ENCODE measurements at regions of chr4 and their contacts with region 1.

Region 1: DNA sequence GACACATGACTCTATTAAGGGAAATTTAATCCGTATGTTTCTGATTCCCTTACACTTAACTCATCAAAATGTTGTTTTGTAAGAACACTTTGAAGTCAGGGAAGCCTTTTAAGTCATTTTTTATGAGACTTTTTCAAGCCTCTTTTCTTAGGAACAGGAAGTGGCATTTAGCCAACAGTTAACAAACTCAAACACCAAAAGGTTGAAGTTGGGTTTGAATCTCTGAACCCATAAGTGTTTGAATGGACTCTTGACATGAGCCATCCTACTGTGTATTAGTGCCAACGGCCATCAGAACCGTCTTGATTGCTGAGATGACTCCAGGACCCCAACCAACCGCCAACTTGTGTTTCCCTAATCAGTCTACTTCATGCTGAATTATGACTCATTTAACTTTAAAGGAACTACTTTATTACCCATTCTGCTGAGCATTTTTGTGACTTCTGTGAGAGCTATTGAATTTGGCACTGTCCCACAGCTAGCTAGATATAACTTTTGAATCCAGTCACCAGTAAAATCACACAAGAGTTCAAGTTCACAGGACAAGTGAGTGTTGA is 209.1 kb upstream of the FAT1 start:
- DNase-seq: peak; percentile 99
- ATAC-seq: peak; percentile 71
- H3K4me3 ChIP-seq: peak overlapping the region in 1 of 2 experiments; percentile 26; a peak in 2 of 4 replicates
- H3K27ac ChIP-seq: peak overlapping the region; percentile 77
- H3K4me1 ChIP-seq: peaks cover 70 to 98% of the 10 kb centered on the region in 2 experiments
- H3K27me3 ChIP-seq: no peaks in the 10 kb centered on the region
- CTCF ChIP-seq: no peak
- POLR2A ChIP-seq: no peak
- RAD21 ChIP-seq: no peak

Region 2: DNA sequence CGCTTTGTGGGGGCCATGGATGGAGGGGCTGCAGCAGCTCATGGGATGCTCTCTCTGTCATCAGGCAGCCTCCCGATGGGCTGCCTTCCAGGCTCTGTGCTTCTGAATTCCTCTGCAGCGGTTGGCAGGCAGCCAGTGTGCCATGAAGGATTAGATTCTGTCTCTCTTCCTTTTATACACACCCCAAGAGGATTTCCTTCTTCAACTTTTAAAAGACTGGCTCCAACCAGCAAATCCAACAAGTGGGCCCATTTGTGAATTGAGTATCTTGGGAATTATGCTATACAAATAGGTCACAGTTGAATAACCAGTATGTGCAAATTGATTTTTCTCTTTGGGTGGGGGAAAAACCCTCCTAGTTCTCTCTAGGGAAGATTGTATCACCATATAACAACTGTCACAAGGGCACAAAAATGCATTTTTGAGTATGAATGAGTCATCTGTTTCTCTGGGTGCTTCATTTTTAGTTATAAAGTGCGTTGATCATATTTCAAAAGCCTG is 112.3 kb before region 1 on chr4:
- CTCF ChIA-PET with region 1: no interaction called
- POLR2A ChIA-PET with region 1: interaction called, 5 read pairs
- RAD21 ChIA-PET with region 1: no interaction called
- intact Hi-C with region 1: loop called (anchors 5 kb)
- DNase-seq: peak; percentile 71
- ATAC-seq: peak; percentile 53
- H3K4me3 ChIP-seq: peak overlapping the region in 1 of 2 experiments; percentile 31; a peak in 2 of 4 replicates
- H3K27ac ChIP-seq: peak overlapping the region; percentile 81
- H3K4me1 ChIP-seq: peaks cover 66 to 86% of the 10 kb centered on the region in 2 experiments
- H3K27me3 ChIP-seq: no peaks in the 10 kb centered on the region
- CTCF ChIP-seq: no peak
- POLR2A ChIP-seq: no peak
- RAD21 ChIP-seq: no peak

Measured in HCT116 (cell line).